ENCODE measurements at regions of chr12 and their contacts with region 1.

Region 1: GRCh38 chr12:68223083-68223747 is 2.4 kb downstream of the IL26 start:
- DNase-seq: peak; percentile 68
- H3K4me3 Mint-ChIP-seq: peak overlapping the region; percentile 79
- H3K27ac Mint-ChIP-seq: peak overlapping the region; percentile 61
- H3K4me1 Mint-ChIP-seq: peaks cover 56% of the 10 kb centered on the region
- H3K27me3 Mint-ChIP-seq: no peaks in the 10 kb centered on the region

Region 2: GRCh38 chr12:68203460-68203875 is 19.7 kb before region 1 on chr12:
- intact Hi-C with region 1: loop called (anchors 2 kb)
- DNase-seq: no peak
- H3K4me3 Mint-ChIP-seq: no peak overlapping the region
- H3K27ac Mint-ChIP-seq: peak overlapping the region; percentile 19
- H3K4me1 Mint-ChIP-seq: peaks cover 75% of the 10 kb centered on the region
- H3K27me3 Mint-ChIP-seq: no peaks in the 10 kb centered on the region

Region 3: GRCh38 chr12:68259318-68259940 is 36.2 kb after region 1 on chr12:
- intact Hi-C with region 1: loop called (anchors 1 kb)
- DNase-seq: peak; percentile 31
- H3K4me3 Mint-ChIP-seq: peak overlapping the region; percentile 12
- H3K27ac Mint-ChIP-seq: peak overlapping the region; percentile 69
- H3K4me1 Mint-ChIP-seq: peaks cover 68% of the 10 kb centered on the region
- H3K27me3 Mint-ChIP-seq: peaks cover 19% of the 10 kb centered on the region

Region 4: GRCh38 chr12:68317047-68317667 is 93.9 kb after region 1 on chr12:
- intact Hi-C with region 1: loop called (anchors 1 kb)
- DNase-seq: no peak
- H3K4me3 Mint-ChIP-seq: no peak overlapping the region
- H3K27ac Mint-ChIP-seq: no peak overlapping the region
- H3K4me1 Mint-ChIP-seq: peaks cover 17% of the 10 kb centered on the region
- H3K27me3 Mint-ChIP-seq: no peaks in the 10 kb centered on the region

Measured in activated T-helper 1 cell treated with anti-CD3 and anti-CD28 coated beads, Interleukin-12 subunit alpha, Interleukin-12 subunit beta, Interleukin-2, Interleukin-4 antibody, amounts not matched to agents 30 ng/mL and 10 ng/mL and 1 ng/mL, durations not matched to agents 14 hours and 24 hours and 36 hours (primary cell).